Mammary epithelial cell (primary cell): ENCODE measurements at regions of chr20 and their contacts with region 1.

Region 1: GRCh38 chr20:36550797-36551299 is 9.5 kb downstream of the MYL9 start:
- DNase-seq: peak; percentile 26
- H3K4me3 ChIP-seq: no peak overlapping the region
- H3K27ac ChIP-seq: no peak overlapping the region
- H3K4me1 ChIP-seq: no peaks in the 10 kb centered on the region
- H3K27me3 ChIP-seq: no peaks in the 10 kb centered on the region
- CTCF ChIP-seq: no peak

Region 2: GRCh38 chr20:36591854-36592641 is 41.2 kb after region 1 on chr20:
- CTCF ChIA-PET with region 1: no interaction called
- dilution Hi-C with region 1: no loop called
- in situ Hi-C with region 1: no loop called
- intact Hi-C with region 1: loop called (anchors 1 kb)
- DNase-seq: peak; percentile 9
- H3K4me3 ChIP-seq: no peak overlapping the region
- H3K27ac ChIP-seq: no peak overlapping the region
- H3K4me1 ChIP-seq: no peaks in the 10 kb centered on the region
- H3K27me3 ChIP-seq: no peaks in the 10 kb centered on the region
- CTCF ChIP-seq: peak in 1 of 2 donors; percentile 43

Region 3: DNA sequence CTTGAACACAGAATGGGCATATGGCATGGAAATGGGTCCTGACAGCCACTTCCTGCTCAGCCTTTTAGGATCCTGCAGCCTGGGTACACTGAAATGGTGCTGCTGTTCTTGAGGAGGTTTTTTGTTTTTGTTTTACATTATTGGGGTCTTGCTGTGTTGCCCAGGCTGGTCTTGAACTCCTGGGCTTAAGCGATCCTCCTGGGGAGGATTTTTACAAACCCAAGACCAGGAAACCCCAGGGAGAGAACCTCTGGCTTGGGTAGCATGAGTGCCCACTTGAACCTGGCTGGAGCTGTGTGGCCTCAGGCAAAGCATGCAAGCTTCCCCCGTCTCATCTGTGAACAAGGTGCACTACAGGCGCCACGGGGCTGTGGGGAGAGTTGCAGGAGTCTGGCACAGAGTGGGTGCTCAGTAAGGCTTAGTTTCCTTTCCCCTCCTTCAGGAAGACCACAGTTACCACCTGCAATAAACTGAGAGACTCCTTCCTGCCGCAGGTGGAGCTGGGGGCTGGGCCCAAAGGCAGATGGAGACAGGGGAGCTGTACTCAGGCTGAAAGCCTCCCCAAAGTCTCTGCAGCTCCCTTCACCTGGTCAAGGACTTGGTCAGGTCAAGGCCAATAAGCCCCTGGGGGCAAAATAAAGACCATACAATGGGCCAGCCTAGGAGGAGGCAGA is 93.3 kb after region 1 on chr20:
- CTCF ChIA-PET with region 1: no interaction called
- dilution Hi-C with region 1: loop called (anchors 5 kb)
- in situ Hi-C with region 1: no loop called
- intact Hi-C with region 1: no loop called
- DNase-seq: no peak
- H3K4me3 ChIP-seq: no peak overlapping the region
- H3K27ac ChIP-seq: no peak overlapping the region
- H3K4me1 ChIP-seq: peaks cover 10% of the 10 kb centered on the region
- H3K27me3 ChIP-seq: no peaks in the 10 kb centered on the region
- CTCF ChIP-seq: no peak

Region 4: GRCh38 chr20:36754656-36755222 is 203.9 kb after region 1 on chr20:
- CTCF ChIA-PET with region 1: no interaction called
- dilution Hi-C with region 1: no loop called
- in situ Hi-C with region 1: loop called in 1 of 2 experiments (anchors 10 kb)
- intact Hi-C with region 1: loop called (anchors 1 kb)
- DNase-seq: peak; percentile 53
- H3K4me3 ChIP-seq: no peak overlapping the region
- H3K27ac ChIP-seq: no peak overlapping the region
- H3K4me1 ChIP-seq: no peaks in the 10 kb centered on the region
- H3K27me3 ChIP-seq: no peaks in the 10 kb centered on the region
- CTCF ChIP-seq: peak; percentile 82 to 83

Region 5: DNA sequence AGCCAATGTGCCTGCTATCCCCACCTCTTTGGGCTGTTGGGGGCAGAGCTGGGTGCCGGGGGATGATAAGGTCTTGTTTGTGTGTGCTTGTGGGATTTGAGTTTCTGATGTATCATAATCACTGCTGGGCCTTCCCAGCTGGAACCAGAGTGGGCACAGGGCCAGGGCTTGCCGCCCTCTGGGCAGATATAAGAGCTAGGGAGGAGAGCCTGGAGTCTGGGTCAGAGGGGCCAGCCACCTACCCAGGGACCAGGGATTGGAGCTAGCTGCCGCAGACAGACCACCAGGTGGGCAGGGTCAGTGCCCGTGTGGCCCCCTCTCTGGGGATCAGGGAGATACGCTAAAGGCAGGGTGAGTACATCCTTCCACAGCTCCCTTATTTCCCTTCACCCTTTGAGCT is 322.0 kb after region 1 on chr20:
- CTCF ChIA-PET with region 1: no interaction called
- dilution Hi-C with region 1: loop called (anchors 10 kb)
- in situ Hi-C with region 1: no loop called
- intact Hi-C with region 1: no loop called
- DNase-seq: no peak
- H3K4me3 ChIP-seq: no peak overlapping the region
- H3K27ac ChIP-seq: no peak overlapping the region
- H3K4me1 ChIP-seq: no peaks in the 10 kb centered on the region
- H3K27me3 ChIP-seq: no peaks in the 10 kb centered on the region
- CTCF ChIP-seq: no peak

Region 6: DNA sequence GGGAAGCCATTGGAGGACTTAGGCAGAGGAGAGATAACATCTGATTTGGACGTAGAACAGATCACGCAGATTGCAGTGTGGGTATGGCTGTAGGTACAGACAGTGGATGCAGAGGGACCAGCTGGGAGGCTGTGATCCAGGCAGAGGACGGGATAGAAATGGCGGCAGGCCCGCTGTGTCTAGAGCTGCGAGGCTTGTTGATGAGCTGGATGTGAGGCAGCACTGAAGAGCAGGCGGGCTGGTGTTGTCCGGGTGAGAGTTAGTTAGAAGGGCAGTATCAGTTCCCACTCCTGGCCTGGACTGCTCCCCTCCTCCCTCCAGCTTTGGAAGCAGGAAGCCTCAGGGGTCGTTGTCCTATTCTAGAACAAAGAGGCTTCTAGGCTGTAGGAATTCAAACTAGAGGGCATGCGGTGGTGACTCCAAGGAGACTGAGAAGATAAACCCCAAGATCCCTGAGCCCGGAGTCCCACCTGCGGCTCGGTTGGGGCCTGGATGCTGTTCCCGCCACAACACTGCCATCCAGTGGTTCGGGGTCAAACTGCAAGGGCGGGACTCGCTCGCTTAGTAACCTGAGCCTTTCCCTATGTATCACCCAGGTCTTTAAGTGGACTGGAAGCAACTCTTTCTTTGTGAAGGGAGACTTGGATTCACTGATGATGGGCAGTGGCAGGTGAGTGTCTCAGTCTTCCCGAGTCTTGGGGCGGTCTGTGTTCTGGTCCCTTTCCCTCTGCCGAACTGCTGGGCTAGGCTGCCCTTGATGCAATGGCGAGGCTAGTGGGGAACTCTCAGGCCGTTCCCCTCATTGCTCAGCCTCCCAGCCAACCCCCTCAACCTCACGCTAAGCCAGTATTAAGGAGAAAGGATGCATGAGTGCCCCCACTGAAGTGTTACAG is 336.3 kb after region 1 on chr20:
- CTCF ChIA-PET with region 1: no interaction called
- dilution Hi-C with region 1: no loop called
- in situ Hi-C with region 1: no loop called
- intact Hi-C with region 1: loop called (anchors 2 kb)
- DNase-seq: peak; percentile 73
- H3K4me3 ChIP-seq: no peak overlapping the region
- H3K27ac ChIP-seq: no peak overlapping the region
- H3K4me1 ChIP-seq: no peaks in the 10 kb centered on the region
- H3K27me3 ChIP-seq: no peaks in the 10 kb centered on the region
- CTCF ChIP-seq: peak; percentile 98 to 99

Region 7: DNA sequence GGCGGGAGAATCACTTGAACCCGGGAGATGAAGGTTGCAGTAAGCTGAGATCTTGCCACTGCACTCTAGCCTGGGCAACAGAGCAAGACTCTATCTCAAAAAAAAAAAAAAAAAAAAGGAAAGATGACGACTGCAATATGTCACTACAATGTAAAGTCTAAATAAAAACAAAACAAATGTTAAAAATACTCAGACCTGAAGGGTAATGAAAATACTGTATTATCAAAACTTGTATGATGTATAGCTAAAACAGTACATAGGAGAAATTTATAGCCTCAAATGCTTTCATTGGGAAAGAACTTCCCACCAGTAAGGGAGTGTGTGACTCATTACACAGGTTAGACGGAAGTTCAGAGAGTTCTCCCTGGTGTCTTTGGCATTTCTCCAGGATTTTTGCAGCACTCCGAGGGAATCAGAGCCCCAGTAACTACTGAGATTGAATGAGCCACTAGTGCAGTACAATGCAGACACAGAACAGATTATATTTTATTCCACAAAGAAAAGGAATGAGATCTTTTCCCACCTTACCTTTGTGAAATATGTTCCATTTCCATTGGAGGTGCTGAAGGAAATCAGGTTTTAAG is 1909.3 kb after region 1 on chr20:
- CTCF ChIA-PET with region 1: interaction called, 17 read pairs
- dilution Hi-C with region 1: no loop called
- in situ Hi-C with region 1: no loop called
- intact Hi-C with region 1: no loop called
- DNase-seq: peak; percentile 88
- H3K4me3 ChIP-seq: no peak overlapping the region
- H3K27ac ChIP-seq: peak overlapping the region; percentile 41
- H3K4me1 ChIP-seq: peaks cover 9% of the 10 kb centered on the region
- H3K27me3 ChIP-seq: no peaks in the 10 kb centered on the region
- CTCF ChIP-seq: no peak